ENCODE measurements at regions of chr5 and their contacts with region 1.

Region 1: DNA sequence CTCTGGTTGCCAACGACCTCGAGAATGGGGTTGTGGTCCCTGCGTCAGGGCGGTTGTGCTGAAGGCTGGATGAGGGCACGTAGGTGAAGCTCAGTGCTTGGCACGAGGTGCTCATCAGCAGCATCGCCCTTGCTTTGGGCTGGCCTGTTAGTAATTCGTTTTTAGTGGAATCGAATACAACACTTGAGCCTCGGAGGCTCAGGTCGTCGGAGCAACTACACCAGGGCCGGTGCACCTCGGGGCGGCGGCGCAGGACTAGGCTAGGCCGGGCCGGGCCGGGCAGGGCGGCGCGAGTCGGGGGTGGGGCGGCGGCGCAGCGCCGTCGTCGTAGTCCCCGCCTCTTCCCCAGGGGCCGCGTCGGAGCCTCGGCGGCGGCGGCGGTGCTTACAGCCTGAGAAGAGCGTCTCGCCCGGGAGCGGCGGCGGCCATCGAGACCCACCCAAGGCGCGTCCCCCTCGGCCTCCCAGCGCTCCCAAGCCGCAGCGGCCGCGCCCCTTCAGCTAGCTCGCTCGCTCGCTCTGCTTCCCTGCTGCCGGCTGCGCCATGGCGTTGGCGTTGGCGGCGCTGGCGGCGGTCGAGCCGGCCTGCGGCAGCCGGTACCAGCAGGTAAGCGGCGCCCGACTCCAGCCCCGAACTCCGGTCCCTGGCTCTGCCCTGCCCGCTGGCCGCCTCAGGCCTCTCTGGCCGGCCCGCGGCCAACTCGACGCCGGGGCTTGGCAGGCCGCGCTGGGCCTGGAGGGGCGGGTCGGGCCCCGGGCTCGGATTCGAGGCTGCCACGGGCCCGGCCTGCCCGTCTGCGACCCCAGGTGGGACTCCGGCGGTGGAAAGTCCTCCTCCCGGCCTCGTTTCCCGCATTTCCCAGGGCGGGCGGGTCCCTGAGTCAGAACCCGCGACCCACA is at the start of gene NDFIP1:
- DNase-seq: peak; percentile 72 to 94 (median 84)
- ATAC-seq: peak; percentile 70
- H3K4me3 ChIP-seq: peak within 1 kb of the TSS; percentile 75
- H3K4me3 Mint-ChIP-seq: peak within 1 kb of the TSS; percentile 95
- H3K27ac ChIP-seq: peak within 1 kb of the TSS; percentile 89 to 99
- H3K27ac Mint-ChIP-seq: peak within 1 kb of the TSS; percentile 98
- H3K4me1 ChIP-seq: peaks cover 41% of the 10 kb centered on the region
- H3K4me1 Mint-ChIP-seq: peaks cover 79% of the 10 kb centered on the region
- H3K27me3 ChIP-seq: no peaks in the 10 kb centered on the region
- H3K27me3 Mint-ChIP-seq: no peaks in the 10 kb centered on the region
- CTCF ChIP-seq: no peak
- total RNA-seq, gene NDFIP1: 185 to 192 TPM

Region 2: DNA sequence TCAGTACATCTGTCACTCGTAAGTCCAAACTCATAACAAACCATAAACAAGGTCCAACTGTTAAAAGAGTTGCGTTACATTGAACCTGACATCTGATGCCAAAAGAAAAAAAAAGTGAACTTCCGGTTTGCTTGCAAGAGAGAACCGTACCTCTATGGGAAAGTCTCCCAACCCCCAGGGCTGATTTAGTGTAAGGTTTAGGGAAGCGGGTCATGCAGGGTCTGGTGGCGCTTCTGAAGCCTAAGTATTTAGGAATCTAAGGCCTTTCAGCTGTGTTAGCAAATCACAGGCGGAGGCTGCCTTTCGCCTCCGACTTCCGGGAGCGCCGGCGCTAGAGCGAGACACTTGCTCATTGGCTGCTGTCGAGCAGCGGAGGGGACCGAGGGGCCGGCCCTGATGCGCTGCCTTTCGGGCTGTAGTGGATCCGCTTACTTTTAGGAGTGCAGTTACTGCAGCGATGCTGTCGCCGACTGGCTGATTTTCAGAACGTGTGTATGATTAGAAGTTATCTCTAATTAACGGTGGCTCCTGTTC is 83.8 kb before region 1 on chr5:
- CTCF ChIA-PET with region 1: interaction called, 3 read pairs
- POLR2A ChIA-PET with region 1: interaction called, 35 read pairs
- intact Hi-C with region 1: no loop called
- DNase-seq: peak; percentile 62 to 91 (median 80)
- ATAC-seq: peak; percentile 100
- H3K4me3 ChIP-seq: peak overlapping the region; percentile 53
- H3K4me3 Mint-ChIP-seq: peak overlapping the region; percentile 83
- H3K27ac ChIP-seq: peak overlapping the region; percentile 72 to 88
- H3K27ac Mint-ChIP-seq: peak overlapping the region; percentile 93
- H3K4me1 ChIP-seq: peaks cover 8% of the 10 kb centered on the region
- H3K4me1 Mint-ChIP-seq: peaks cover 25% of the 10 kb centered on the region
- H3K27me3 ChIP-seq: no peaks in the 10 kb centered on the region
- H3K27me3 Mint-ChIP-seq: no peaks in the 10 kb centered on the region
- CTCF ChIP-seq: no peak

Region 3: DNA sequence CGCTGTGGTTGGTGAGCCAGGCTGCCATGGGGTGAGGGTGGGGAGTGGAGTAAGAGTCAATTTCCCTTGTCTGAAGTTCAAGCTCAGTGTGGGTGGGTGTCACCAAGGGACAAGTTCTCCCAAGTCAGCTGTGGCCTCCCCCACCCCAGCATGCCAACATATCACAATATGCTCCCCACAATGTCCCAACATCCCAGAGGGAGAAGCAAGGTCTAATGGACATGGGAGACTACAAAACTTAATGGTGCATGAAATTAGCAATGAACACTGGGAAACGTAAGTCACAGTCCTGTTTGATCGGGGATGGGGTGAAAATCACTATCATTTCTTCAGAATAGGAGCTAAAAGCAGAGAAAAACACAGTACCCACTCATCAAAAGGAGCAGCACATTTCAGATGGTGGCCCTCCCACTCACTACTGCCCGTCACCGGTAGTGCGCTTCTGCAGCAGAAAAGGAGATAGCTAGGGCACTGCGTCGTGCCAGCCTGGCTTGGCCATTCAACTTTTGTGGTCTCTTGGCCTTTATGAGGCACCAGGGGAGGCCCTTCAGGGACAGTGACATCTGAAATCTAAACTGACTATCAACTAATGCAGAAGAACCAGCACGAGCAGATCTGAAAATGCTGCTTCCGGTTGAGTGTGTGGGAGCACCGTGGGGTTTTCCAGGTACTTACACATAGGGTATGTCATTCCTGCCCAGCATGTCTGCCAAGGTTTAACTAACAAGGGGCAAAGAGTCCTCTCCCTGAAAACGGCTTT is 20.6 kb before region 1 on chr5:
- CTCF ChIA-PET with region 1: interaction called, 4 read pairs
- POLR2A ChIA-PET with region 1: interaction called, 197 read pairs
- intact Hi-C with region 1: no loop called
- DNase-seq: peak in 5 of 14 experiments; percentile 22 to 79 (median 56)
- ATAC-seq: peak; percentile 80
- H3K4me3 ChIP-seq: peak overlapping the region; percentile 33
- H3K4me3 Mint-ChIP-seq: peak overlapping the region; percentile 69
- H3K27ac ChIP-seq: no peak overlapping the region
- H3K27ac Mint-ChIP-seq: peak overlapping the region; percentile 86
- H3K4me1 ChIP-seq: peaks cover 30% of the 10 kb centered on the region
- H3K4me1 Mint-ChIP-seq: peaks cover 42% of the 10 kb centered on the region
- H3K27me3 ChIP-seq: no peaks in the 10 kb centered on the region
- H3K27me3 Mint-ChIP-seq: no peaks in the 10 kb centered on the region
- CTCF ChIP-seq: no peak

Region 4: DNA sequence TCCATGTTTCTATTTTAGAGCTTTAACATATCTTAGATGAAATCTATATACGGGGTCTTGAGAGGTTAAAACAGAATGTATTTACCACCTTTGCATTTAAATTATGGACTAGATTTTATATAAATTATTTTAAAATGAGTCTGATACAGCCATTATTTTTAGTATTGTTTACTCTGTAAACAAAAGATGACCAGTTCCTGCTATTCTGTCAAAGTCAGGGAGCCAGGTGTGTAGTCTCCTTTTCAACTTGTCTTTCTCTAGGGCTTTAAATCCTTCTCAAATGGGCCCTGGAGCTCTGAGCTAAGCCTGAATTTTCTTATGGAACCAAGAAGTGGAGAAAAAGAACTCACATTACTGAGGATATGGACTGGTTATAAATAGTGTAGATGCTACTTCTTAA is 14.9 kb after region 1 on chr5:
- CTCF ChIA-PET with region 1: interaction called, 3 read pairs
- POLR2A ChIA-PET with region 1: interaction called, 19 read pairs
- intact Hi-C with region 1: loop called in 1 of 2 experiments (anchors 2 kb)
- DNase-seq: no peak
- ATAC-seq: no peak
- H3K4me3 ChIP-seq: no peak overlapping the region
- H3K4me3 Mint-ChIP-seq: no peak overlapping the region
- H3K27ac ChIP-seq: no peak overlapping the region
- H3K27ac Mint-ChIP-seq: no peak overlapping the region
- H3K4me1 ChIP-seq: peaks cover 46% of the 10 kb centered on the region
- H3K4me1 Mint-ChIP-seq: peaks cover 91% of the 10 kb centered on the region
- H3K27me3 ChIP-seq: no peaks in the 10 kb centered on the region
- H3K27me3 Mint-ChIP-seq: no peaks in the 10 kb centered on the region
- CTCF ChIP-seq: no peak

Region 5: DNA sequence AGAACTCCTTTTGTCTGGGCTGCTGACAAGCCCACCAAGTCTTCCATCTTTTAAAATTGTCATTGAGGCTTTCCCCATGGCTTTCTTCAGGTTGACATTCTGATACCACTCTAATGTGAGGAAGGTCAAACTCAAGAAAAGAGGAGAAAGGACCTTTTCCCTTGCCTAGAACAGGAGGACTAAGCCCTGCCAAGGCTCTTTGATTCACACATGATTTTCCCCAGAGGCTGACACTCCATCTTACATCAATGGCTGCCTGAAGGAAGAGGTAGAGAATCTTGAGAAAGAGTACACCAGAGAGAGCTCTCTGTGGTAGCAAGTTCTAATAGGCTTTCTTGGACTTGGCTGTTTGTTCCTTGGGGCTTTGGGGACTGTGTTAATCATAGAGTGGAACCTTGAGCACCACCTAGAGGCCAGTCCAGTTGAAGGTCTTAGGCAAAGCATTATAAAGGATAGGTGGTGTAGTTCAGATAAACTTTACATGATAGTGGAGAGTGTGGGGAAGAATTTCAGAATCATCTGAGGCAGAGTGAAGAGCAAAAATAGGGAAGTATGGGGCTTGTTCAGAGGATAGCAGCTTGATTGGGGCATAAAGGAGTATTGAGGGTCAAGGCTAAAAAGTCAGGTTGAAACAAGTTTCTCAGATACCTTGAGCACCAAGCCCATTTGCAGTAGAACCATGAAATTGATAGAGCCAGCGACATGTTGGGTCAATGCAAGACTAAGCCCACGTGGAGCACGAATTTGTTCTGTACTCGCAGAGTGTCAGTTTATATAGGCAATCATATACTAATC is 36.6 kb after region 1 on chr5:
- CTCF ChIA-PET with region 1: no interaction called
- POLR2A ChIA-PET with region 1: interaction called, 5 read pairs
- intact Hi-C with region 1: loop called (anchors 5 kb)
- DNase-seq: peak; percentile 28 to 79 (median 52)
- ATAC-seq: peak; percentile 74
- H3K4me3 ChIP-seq: no peak overlapping the region
- H3K4me3 Mint-ChIP-seq: no peak overlapping the region
- H3K27ac ChIP-seq: no peak overlapping the region
- H3K27ac Mint-ChIP-seq: no peak overlapping the region
- H3K4me1 ChIP-seq: no peaks in the 10 kb centered on the region
- H3K4me1 Mint-ChIP-seq: peaks cover 5% of the 10 kb centered on the region
- H3K27me3 ChIP-seq: no peaks in the 10 kb centered on the region
- H3K27me3 Mint-ChIP-seq: no peaks in the 10 kb centered on the region
- CTCF ChIP-seq: peak; percentile 75

Region 6: DNA sequence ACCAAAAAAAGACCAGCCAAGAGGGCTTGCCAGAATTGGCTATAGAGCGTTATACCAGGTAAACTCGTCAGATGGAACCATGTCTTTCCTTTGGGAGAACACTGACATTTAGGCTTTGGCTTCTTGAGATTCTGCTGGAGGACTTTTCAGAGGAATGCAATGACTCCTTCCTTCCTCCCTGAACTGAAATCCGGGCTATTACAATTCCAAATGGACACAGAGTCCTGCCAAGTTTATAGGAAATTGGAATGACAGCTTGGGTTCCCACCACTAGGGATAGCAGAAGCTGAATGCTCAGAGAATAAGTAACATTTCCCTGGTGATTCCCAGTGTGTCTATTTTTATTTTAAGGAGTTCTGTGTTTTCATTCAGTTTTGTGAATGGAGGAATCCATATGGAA is 434.2 kb after region 1 on chr5:
- CTCF ChIA-PET with region 1: no interaction called
- POLR2A ChIA-PET with region 1: no interaction called
- intact Hi-C with region 1: no loop called
- DNase-seq: no peak
- ATAC-seq: no peak
- H3K4me3 ChIP-seq: no peak overlapping the region
- H3K4me3 Mint-ChIP-seq: no peak overlapping the region
- H3K27ac ChIP-seq: no peak overlapping the region
- H3K27ac Mint-ChIP-seq: no peak overlapping the region
- H3K4me1 ChIP-seq: no peaks in the 10 kb centered on the region
- H3K4me1 Mint-ChIP-seq: no peaks in the 10 kb centered on the region
- H3K27me3 ChIP-seq: peaks cover 0 to 6% of the 10 kb centered on the region in 2 experiments
- H3K27me3 Mint-ChIP-seq: peaks cover 5% of the 10 kb centered on the region
- CTCF ChIP-seq: no peak